ENCODE measurements at regions of chr9 and their contacts with region 1.

Region 1: DNA sequence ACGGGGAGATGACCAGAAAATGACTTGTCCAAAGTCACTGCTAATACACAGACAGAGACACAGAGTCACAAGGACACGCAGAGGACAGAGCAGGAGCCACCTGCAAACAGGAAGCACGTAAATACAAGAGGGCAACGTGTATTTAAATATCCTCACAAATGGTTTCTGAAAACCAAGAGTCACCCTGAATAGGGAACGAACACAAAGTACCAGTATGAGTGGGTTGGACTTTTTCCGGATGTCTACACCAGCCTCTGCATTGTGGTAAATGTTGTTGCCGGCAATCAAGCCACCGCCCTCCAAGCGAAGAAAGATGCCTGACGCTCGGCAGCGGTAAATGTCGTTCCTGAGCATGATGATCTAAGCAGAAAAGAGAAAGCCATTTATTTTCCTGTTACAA is 44.5 kb downstream of the FBXO10 start:
- DNase-seq: no peak
- H3K4me3 ChIP-seq: no peak overlapping the region
- H3K27ac ChIP-seq: no peak overlapping the region
- H3K4me1 ChIP-seq: no peaks in the 10 kb centered on the region
- H3K27me3 ChIP-seq: no peaks in the 10 kb centered on the region
- CTCF ChIP-seq: no peak
- POLR2A ChIP-seq: no peak

Region 2: DNA sequence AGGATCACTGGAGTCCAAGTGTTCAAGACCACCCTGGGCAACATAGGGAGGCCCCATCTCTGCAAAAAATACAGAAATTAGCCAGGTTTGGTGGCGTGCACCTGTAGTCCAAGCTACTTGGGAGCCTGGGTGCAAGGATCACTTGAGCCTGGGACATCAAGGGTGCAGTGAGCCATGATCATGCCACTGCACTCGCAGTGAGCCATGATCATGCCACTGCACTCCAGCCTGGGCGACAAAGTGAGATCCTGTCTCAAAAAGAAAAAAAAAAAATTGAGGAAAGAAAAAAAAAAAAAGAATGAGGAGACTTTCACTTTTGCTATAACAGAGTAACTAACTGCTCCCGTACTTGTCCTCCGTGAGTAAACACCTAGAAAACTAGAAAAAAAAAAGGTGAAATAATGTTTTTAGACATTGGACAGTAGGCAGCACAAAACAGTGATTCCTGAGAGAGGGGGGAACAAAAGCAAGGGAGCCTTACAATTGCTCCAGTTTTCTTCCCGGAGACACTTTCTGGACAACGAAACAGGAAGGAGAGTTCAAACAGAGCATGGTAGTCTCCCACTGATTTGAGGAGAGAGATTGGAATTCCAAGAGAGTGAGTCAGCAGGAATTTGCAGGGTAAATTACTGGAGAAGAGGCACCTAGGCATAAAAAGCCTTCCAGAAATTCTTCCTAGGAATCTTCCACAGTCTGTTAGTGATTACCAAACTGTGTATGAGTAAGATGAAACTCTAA is 59.6 kb before region 1 on chr9:
- intact Hi-C with region 1: loop called in 1 of 2 experiments (anchors 10 kb)
- DNase-seq: peak in 2 of 7 donors; percentile 32 to 37
- H3K4me3 ChIP-seq: peak overlapping the region in 2 of 4 donors; percentile 29 to 45
- H3K27ac ChIP-seq: peak overlapping the region; percentile 12 to 88 (median 71)
- H3K4me1 ChIP-seq: peaks cover 0 to 14% of the 10 kb centered on the region in 2 donors
- H3K27me3 ChIP-seq: no peaks in the 10 kb centered on the region
- CTCF ChIP-seq: no peak
- POLR2A ChIP-seq: peak in 1 of 2 donors; percentile 66

Region 3: GRCh38 chr9:37859043-37859442 is 327.3 kb after region 1 on chr9:
- intact Hi-C with region 1: no loop called
- DNase-seq: no peak
- H3K4me3 ChIP-seq: no peak overlapping the region
- H3K27ac ChIP-seq: no peak overlapping the region
- H3K4me1 ChIP-seq: no peaks in the 10 kb centered on the region
- H3K27me3 ChIP-seq: no peaks in the 10 kb centered on the region
- CTCF ChIP-seq: no peak
- POLR2A ChIP-seq: no peak

Measured in adrenal gland (tissue), 19 donors.